CD4-positive, alpha-beta memory T cell (primary cell): ENCODE measurements at regions of chr1 and their contacts with region 1.

Region 1: GRCh38 chr1:227869851-227870305 is 54.4 kb downstream of the PRSS38 start:
- DNase-seq: peak in 3 of 5 donors; percentile 22 to 31 (median 24)
- H3K4me3 ChIP-seq: peak overlapping the region in 1 of 2 donors; percentile 27
- H3K4me3 Mint-ChIP-seq: peak overlapping the region; percentile 63 to 91 (median 81)
- H3K27ac ChIP-seq: no peak overlapping the region
- H3K27ac Mint-ChIP-seq: peak overlapping the region; percentile 34 to 95 (median 85)
- H3K4me1 ChIP-seq: peaks cover 36% of the 10 kb centered on the region
- H3K4me1 Mint-ChIP-seq: peaks cover 35 to 70% (median 41%) of the 10 kb centered on the region in 4 donors
- H3K27me3 ChIP-seq: no peaks in the 10 kb centered on the region
- H3K27me3 Mint-ChIP-seq: peaks cover 0 to 2% of the 10 kb centered on the region in 2 donors

Region 2: DNA sequence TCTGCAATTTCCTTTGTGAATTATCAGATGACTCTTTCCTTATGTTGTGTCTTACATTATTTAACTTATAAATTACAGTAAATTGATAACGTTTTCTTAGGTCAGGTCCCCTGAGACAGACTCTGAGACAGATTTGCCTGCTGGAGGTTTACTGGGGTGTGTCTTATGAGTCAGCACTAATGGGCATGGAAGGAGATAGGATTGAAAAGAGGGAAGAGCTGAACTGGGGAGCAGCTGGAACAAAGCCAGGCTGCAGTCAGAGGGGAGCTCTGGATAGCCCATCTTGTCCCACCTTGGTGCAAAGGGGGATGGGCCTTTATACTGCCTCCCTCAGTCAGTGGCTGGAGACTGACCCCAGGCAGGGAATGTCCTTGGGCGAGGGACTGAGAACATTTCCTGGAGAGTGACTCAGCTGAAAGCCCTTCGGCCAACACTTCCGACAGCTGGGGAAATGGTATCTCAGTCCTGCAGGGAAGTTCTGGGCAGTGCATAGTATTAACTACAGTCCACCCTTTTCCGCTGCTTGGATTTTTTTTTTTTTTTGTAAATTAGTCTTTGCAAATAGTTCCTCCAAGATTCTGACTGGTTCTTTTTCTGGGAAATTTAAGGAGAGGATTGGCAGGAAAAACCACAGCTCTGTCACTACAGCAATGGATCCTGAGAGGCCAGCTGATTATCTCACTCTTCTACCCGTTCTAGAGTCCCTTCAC is 512.6 kb before region 1 on chr1:
- CTCF ChIA-PET with region 1: no interaction called
- POLR2A ChIA-PET with region 1: no interaction called
- intact Hi-C with region 1: no loop called
- DNase-seq: no peak
- H3K4me3 ChIP-seq: no peak overlapping the region
- H3K4me3 Mint-ChIP-seq: no peak overlapping the region
- H3K27ac ChIP-seq: no peak overlapping the region
- H3K27ac Mint-ChIP-seq: no peak overlapping the region
- H3K4me1 ChIP-seq: no peaks in the 10 kb centered on the region
- H3K4me1 Mint-ChIP-seq: no peaks in the 10 kb centered on the region
- H3K27me3 ChIP-seq: no peaks in the 10 kb centered on the region
- H3K27me3 Mint-ChIP-seq: peaks cover 9 to 11% of the 10 kb centered on the region in 2 donors

Region 3: GRCh38 chr1:227886993-227887696 is 17.3 kb after region 1 on chr1:
- CTCF ChIA-PET with region 1: interaction called, 7 read pairs
- POLR2A ChIA-PET with region 1: interaction called, 49 read pairs
- intact Hi-C with region 1: no loop called
- DNase-seq: peak in 3 of 5 donors; percentile 18 to 29 (median 18)
- H3K4me3 ChIP-seq: peak overlapping the region in 1 of 2 donors; percentile 31
- H3K4me3 Mint-ChIP-seq: peak overlapping the region in 7 of 8 donors; percentile 42 to 68 (median 59)
- H3K27ac ChIP-seq: peak overlapping the region; percentile 40
- H3K27ac Mint-ChIP-seq: peak overlapping the region; percentile 68 to 92 (median 83)
- H3K4me1 ChIP-seq: peaks cover 54% of the 10 kb centered on the region
- H3K4me1 Mint-ChIP-seq: peaks cover 15 to 59% (median 38%) of the 10 kb centered on the region in 4 donors
- H3K27me3 ChIP-seq: no peaks in the 10 kb centered on the region
- H3K27me3 Mint-ChIP-seq: no peaks in the 10 kb centered on the region